ENCODE measurements at regions of chrX and their contacts with region 1.

Region 1: GRCh38 chrX:136028251-136028984 is 43.2 kb downstream of the SLC9A6 start:
- DNase-seq: peak; percentile 38
- CTCF ChIP-seq: peak; percentile 42

Region 2: DNA sequence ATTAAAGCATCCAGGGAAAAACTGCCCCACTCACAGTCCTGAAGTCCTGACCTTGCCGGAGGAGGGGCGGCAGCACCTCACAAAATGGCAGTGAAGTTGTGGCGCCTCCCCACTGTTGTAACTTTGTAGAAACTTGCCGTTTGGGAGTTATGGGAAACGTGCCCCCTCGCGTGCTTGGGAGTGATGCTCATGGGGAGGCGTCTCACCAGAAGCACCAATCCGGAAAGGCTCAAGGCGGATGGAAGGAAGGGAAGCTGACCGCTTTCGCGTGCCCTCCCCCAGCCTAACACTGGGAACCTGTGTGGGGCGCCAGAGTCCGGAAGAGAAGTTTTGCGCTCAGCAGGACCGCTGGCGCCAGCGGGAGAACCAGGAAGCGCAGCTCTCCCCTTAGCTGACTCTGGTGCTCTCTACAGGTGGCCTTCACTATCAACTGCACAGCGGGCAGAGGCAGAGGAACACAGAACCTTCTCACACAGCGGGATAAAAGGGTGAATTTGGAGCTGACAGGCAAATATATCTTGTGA is 135.1 kb before region 1 on chrX and contains the starts of genes CT45A10 and SAGE1:
- in situ Hi-C with region 1: no loop called
- DNase-seq: no peak
- CTCF ChIP-seq: no peak

Region 3: DNA sequence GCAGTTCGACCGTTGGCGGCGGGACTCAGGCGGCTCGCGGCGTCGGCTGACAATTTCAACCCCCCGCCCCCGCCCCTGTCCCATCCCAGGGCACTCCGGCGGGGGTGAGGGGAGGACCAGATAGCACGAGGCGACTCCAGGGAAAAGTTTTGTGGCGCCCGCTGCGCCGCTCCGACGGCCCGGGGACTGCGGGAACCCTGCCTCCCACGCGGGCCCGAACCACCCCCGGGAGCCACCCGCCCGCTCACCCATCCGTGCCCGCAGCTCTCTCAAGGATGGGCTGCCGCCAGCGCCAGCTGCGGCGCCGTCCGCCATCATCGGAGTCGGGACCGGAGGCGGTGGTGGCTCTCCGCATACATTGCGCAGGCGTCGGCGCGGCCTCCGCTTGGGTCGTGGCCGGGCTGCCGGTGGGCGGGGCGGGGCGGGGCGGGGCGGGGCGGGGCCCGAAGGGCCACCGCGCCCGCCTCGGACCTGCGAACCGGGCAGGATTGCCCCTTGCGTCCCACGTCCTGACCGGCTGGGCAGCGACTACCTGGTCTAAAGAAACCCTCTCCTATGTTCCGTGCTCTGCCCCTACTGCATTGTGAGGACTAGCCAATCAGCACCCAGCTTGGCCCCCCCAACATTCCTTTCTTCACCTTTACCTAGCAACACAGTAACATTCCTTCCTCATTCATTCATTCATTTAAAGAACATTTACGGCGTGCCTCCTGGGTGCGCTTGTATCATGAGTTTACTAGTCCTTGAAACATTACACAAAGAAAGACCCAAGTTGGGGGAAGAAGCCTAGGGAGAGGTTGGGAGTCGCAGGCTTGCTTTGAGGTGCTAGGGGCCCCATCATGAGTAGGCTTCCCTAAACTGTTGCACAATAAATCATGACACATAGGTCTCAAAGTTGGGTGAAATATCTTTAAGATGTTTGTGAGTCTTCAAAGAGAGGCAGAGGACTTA is 222.9 kb after region 1 on chrX and contains the start of gene MAP7D3:
- in situ Hi-C with region 1: loop called (anchors 25 kb)
- DNase-seq: peak; percentile 87
- CTCF ChIP-seq: no peak

Region 4: GRCh38 chrX:136694431-136695087 is 666.1 kb after region 1 on chrX:
- in situ Hi-C with region 1: loop called (anchors 25 kb)
- DNase-seq: peak; percentile 57
- CTCF ChIP-seq: peak; percentile 43